ENCODE measurements at regions of chr22 and their contacts with region 1.

Region 1: DNA sequence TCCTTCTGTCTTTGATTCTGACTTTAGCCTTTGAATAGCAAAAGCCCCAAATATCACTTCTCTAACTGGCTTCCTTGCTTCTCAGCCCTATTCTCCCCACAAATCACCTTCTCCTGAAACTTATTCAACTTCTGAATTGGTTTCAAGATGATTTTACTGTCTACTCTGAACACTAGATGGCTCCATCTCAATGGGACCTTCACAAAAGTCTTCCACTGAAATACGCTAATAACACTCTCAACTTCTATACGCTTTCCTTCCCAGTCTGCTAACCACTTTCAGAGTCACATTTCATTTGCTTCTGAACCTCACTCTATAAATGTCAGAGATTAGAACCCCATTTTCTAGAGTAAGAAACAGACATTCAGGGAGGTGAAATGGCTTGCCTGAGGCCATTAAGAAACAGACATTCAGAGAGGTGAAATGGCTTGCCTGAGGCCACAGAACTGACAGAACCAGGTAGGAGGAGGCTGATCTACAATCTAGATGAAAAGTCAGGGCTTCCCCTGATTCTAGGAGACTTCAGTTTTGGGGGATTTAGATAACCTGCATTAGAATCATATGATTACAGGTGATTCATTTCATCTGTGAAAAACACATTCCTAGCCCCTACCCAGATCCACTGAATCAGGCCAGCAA is 20.6 kb downstream of the MORC2 start:
- DNase-seq: no peak
- H3K4me3 ChIP-seq: no peak overlapping the region
- H3K27ac ChIP-seq: no peak overlapping the region
- H3K4me1 ChIP-seq: no peaks in the 10 kb centered on the region
- H3K27me3 ChIP-seq: no peaks in the 10 kb centered on the region
- CTCF ChIP-seq: peak; percentile 22 to 78 (median 68)
- EP300 ChIP-seq: no peak
- POLR2A ChIP-seq: no peak

Region 2: GRCh38 chr22:31139866-31140716 is 192.2 kb after region 1 on chr22 and contains the start of gene PLA2G3:
- intact Hi-C with region 1: loop called in 1 of 4 experiments (anchors 5 kb)
- DNase-seq: peak in 1 of 5 donors; percentile 17
- H3K4me3 ChIP-seq: no peak within 1 kb of the TSS
- H3K27ac ChIP-seq: no peak within 1 kb of the TSS
- H3K4me1 ChIP-seq: no peaks in the 10 kb centered on the region
- H3K27me3 ChIP-seq: no peaks in the 10 kb centered on the region
- CTCF ChIP-seq: no peak
- EP300 ChIP-seq: no peak
- POLR2A ChIP-seq: no peak
- total RNA-seq, gene PLA2G3: 0.13 TPM in 1 of 7 donors, not detected in the others

Region 3: DNA sequence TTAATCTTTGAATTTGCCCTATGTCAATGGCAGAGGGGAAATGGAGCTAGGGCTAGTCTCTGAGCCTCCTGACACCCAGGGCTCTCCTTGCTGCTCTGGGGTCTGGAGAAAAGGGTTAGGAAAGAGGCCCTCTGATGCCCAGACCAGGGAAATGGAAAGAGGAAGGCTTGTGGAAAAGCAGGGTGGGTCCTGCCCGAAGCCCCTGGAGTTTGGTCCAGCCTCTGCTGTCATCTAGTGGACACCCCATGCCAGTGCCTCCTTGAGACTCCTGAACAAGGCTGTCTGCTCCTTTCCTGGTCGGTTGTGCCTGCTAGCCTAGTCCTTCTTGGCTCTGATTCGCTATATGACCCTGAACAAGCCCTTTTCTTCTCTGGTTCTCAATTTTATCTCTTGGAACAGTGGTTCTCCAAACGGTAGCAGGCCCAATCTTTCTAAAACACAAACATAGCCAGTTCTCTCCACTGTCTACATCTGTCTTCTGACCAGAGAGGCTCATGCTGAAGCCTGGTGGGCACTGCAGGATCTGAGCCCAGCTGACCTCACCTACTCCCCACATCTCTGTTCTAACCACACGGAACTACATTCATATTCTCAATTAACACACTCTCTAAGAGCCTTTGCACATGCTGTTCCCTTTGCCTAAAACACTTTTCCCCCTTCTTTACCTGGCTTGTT is 201.2 kb after region 1 on chr22:
- intact Hi-C with region 1: loop called in 2 of 4 experiments (anchors 5 kb)
- DNase-seq: peak; percentile 70 to 77 (median 72)
- H3K4me3 ChIP-seq: no peak overlapping the region
- H3K27ac ChIP-seq: no peak overlapping the region
- H3K4me1 ChIP-seq: no peaks in the 10 kb centered on the region
- H3K27me3 ChIP-seq: no peaks in the 10 kb centered on the region
- CTCF ChIP-seq: peak; percentile 61 to 84 (median 62)
- EP300 ChIP-seq: no peak
- POLR2A ChIP-seq: no peak